ENCODE measurements at regions of chr17 and their contacts with region 1.

Region 1: GRCh38 chr17:1628856-1629646 is 417 bp upstream of the SLC43A2 start:
- DNase-seq: peak; percentile 82
- ATAC-seq: peak; percentile 81
- H3K4me3 ChIP-seq: peak overlapping the region; percentile 85 to 93
- H3K27ac ChIP-seq: peak overlapping the region; percentile 65
- H3K4me1 ChIP-seq: peaks cover 13 to 41% of the 10 kb centered on the region in 2 experiments
- H3K27me3 ChIP-seq: no peaks in the 10 kb centered on the region
- CTCF ChIP-seq: peak in 2 of 3 experiments; percentile 16 to 44; a peak in 1 of 6 replicates
- POLR2A ChIP-seq: no peak
- RAD21 ChIP-seq: no peak; the same call in none of the 2 replicates

Region 2: GRCh38 chr17:1617620-1618174 is 11.4 kb before region 1 on chr17:
- CTCF ChIA-PET with region 1: interaction called, 23 read pairs
- POLR2A ChIA-PET with region 1: interaction called, 16 read pairs
- RAD21 ChIA-PET with region 1: no interaction called
- intact Hi-C with region 1: no loop called
- DNase-seq: peak; percentile 93
- ATAC-seq: peak; percentile 89
- H3K4me3 ChIP-seq: peak overlapping the region; percentile 8 to 45; a peak in 3 of 4 replicates
- H3K27ac ChIP-seq: peak overlapping the region; percentile 95
- H3K4me1 ChIP-seq: peaks cover 41 to 48% of the 10 kb centered on the region in 2 experiments
- H3K27me3 ChIP-seq: no peaks in the 10 kb centered on the region
- CTCF ChIP-seq: peak; percentile 48 to 56 (median 52); a peak in 5 of 6 replicates
- POLR2A ChIP-seq: no peak
- RAD21 ChIP-seq: peak; percentile 55

Region 3: GRCh38 chr17:1658100-1658499 is 29.0 kb after region 1 on chr17:
- CTCF ChIA-PET with region 1: no interaction called
- POLR2A ChIA-PET with region 1: no interaction called
- RAD21 ChIA-PET with region 1: no interaction called
- intact Hi-C with region 1: no loop called
- DNase-seq: no peak
- ATAC-seq: no peak
- H3K4me3 ChIP-seq: no peak overlapping the region
- H3K27ac ChIP-seq: no peak overlapping the region
- H3K4me1 ChIP-seq: no peaks in the 10 kb centered on the region
- H3K27me3 ChIP-seq: no peaks in the 10 kb centered on the region
- CTCF ChIP-seq: no peak
- POLR2A ChIP-seq: no peak
- RAD21 ChIP-seq: no peak

Measured in HCT116 (cell line).